ENCODE measurements at regions of chr6 and their contacts with region 1.

Region 1: DNA sequence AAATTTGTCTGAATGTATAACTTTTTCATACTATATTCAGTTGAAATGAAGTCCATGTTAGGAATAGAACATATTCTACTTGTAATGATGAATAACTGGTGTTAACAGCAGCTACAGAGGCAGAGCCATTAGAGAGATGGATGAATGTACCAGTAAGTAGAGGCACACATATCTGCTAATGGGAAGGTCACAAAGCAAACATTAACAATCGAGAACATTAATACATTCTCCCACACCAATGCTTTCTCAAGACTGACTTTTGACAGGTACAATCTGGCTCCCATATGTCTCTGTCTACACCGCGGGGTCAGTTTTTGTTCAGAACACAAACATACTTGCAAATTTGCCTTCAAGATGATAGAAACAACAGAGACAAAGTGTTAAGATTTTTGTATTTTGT is 776.0 kb upstream of the MANEA start:
- DNase-seq: no peak
- H3K4me3 ChIP-seq: no peak overlapping the region
- H3K27ac ChIP-seq: no peak overlapping the region
- H3K4me1 ChIP-seq: no peaks in the 10 kb centered on the region
- H3K27me3 ChIP-seq: no peaks in the 10 kb centered on the region
- CTCF ChIP-seq: no peak
- POLR2A ChIP-seq: no peak

Region 2: GRCh38 chr6:94362061-94362864 is 439.1 kb before region 1 on chr6:
- intact Hi-C with region 1: loop called (anchors 5 kb)
- DNase-seq: no peak
- H3K4me3 ChIP-seq: no peak overlapping the region
- H3K27ac ChIP-seq: no peak overlapping the region
- H3K4me1 ChIP-seq: no peaks in the 10 kb centered on the region
- H3K27me3 ChIP-seq: no peaks in the 10 kb centered on the region
- CTCF ChIP-seq: no peak
- POLR2A ChIP-seq: no peak